GM13976 (cell line): ENCODE measurements at regions of chr16 and their contacts with region 1.

Region 1: DNA sequence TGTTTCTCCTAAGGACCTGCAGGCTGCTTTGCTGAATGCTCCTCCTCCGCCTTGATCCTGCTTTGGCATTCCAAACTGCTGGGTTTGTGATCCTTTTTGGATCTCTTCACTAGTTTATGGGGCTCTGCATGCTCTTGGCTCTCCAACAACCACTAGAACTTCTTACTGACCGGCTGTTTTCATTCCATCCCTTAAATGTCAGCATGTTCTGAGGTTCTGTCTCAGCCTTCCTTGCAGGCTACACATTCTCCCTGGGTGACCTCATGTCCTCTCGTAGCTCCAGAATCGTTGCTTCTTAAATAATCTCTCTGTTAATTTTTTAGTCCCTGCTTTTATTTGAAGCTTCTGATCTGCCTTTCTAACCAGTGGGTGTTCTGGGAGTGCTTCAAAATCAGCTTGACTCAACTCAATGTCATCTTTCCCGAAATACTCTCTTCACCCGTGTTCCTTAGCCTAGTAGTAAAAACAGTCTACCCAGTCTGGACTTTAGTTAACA is 119.0 kb upstream of the HS3ST2 start:
- DNase-seq: no peak
- CTCF ChIP-seq: no peak

Region 2: DNA sequence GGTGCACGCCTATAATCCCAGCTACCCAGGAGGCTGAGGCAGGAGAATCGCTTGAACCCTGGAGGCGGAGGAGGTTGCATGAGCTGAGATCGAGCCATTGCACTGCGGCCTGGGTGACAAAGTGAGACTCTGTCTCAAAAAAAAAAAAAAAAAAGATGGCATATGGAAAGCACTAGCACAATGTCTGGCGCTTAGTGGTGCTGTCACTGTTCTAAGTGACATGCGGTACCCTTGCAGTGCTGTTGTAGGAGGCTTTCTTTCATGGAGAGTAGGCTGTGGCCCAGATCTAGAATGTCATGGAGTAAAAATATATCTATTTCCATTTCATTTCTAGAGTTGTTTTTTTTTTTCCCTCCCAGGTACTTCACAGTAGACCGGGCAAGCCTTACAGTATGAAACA is 1110.1 kb before region 1 on chr16:
- in situ Hi-C with region 1: loop called (anchors 5 kb)
- DNase-seq: no peak
- CTCF ChIP-seq: no peak

Region 3: DNA sequence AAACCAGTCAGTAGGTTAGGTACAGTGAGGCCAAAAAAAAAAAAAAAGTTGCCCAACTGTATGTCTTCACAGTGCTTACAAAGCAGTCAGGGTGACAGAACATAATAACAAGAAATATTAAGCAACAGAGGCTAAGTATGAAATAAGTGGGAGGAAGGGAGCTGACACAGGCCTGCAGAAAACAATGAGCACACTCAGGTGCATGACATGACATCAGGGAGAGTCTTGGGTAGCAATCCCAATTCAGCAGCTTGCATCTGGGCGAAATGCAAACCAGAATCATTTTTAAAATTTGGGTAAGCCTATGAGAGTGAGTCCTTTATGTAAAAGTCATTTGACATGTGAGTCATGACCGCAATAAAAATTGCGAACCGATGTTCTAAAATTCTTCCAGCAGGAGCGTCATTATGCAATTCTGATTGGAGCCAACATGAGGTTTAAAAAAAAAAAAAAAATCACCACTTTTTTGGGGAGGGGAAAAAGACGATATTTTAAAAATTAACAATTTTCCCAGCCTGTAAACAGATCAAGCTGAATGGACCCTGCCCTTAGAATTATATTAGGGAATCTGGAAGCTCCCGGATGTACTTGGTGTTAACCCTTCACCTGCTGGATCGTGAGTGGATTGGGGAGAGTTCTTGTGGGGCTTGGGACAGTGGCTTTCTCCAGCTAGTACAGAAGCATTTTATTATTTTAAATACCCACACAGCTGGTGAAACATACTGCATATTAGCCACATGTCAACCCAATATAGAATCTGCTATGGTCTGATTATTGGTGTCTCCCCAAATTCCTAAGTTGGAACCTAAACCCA is 56.3 kb before region 1 on chr16:
- in situ Hi-C with region 1: no loop called
- DNase-seq: no peak
- CTCF ChIP-seq: no peak